Activated CD8-positive, alpha-beta memory T cell treated with anti-CD3 and anti-CD28 coated beads, Interleukin-2, amount 10 ng/mL, durations not matched to agents 7 days and 5 days (primary cell): ENCODE measurements at regions of chr5 and their contacts with region 1.

Region 1: GRCh38 chr5:54867310-54867944 is 118.0 kb downstream of the ESM1 start:
- DNase-seq: no peak
- ATAC-seq: peak; percentile 60
- H3K4me3 Mint-ChIP-seq: no peak overlapping the region
- H3K27ac Mint-ChIP-seq: no peak overlapping the region
- H3K4me1 Mint-ChIP-seq: peaks cover 20% of the 10 kb centered on the region
- H3K27me3 Mint-ChIP-seq: peaks cover 71% of the 10 kb centered on the region

Region 2: GRCh38 chr5:54492178-54492577 is 375.2 kb before region 1 on chr5:
- CTCF ChIA-PET with region 1: interaction called, 20 read pairs
- DNase-seq: no peak
- ATAC-seq: no peak
- H3K4me3 Mint-ChIP-seq: no peak overlapping the region
- H3K27ac Mint-ChIP-seq: no peak overlapping the region
- H3K4me1 Mint-ChIP-seq: no peaks in the 10 kb centered on the region
- H3K27me3 Mint-ChIP-seq: peaks cover 16% of the 10 kb centered on the region

Region 3: DNA sequence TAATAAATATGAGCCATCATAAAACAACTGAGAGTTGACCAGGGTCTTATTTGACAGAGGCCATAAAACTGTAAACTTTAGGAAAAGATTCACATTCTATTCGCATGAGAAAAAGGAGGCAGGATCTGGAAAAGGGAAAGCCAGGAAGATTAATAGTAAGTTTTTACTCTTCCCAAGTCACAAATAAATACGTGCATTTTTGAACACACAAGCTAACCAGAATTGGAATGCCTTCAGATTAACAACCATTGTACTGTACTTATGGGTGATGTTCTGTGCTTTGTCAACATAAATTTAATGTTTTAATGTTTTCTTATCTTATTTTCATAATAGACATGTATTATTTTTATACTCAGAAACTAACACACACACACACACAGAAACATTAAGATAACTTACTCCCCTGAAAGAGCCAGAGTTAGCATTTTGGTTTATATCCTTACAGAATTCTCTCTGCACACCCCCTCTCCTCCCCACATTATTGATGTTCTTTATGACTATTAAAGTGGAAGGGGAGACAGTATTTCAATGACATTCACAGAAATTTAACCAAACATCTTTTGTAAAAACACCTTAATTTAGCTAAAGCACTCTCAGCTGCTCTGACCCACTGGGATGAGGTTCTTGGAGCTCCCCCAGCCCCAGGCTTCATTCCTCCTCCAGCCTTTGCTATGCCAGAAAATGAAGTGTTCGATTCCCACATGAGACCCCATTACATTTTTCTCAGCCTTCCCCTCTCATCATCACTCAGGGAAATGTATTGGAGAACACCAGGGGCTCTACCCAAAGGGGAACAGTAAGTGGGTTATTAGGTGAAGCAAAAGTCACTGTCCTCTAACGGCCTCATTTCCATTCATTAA is 37.5 kb before region 1 on chr5:
- CTCF ChIA-PET with region 1: no interaction called
- DNase-seq: no peak
- ATAC-seq: no peak
- H3K4me3 Mint-ChIP-seq: no peak overlapping the region
- H3K27ac Mint-ChIP-seq: no peak overlapping the region
- H3K4me1 Mint-ChIP-seq: peaks cover 9% of the 10 kb centered on the region
- H3K27me3 Mint-ChIP-seq: peaks cover 5% of the 10 kb centered on the region

Region 4: DNA sequence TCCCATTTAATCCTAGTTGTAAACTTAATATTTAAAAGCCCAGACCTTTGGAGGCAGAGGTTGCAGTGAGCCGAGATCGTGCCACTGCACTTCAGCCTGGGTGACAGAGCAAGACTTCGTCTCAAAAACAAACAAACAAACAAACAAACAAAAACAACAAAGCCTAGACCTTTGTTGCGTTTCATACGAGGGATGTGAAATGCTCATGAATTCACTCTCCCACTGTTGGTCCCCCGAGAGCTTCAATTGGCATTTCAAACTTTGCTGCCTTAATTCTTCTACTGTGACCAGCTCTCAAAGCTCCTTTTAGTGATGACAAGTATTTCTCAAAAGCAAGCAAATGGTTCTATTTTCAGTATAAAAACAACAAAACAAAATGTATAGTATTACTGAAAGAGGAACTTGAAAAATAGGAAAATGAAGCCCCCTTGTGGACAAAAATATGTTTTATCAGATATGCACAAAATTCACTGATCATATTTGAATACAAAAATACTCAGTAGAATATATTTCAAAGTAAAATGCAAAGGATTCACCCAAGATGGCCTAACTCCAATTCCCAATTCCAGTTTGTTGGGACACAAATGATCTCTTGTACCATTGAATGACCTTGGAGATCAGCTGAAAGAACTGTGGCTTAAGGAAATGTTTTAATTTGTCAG is 22.4 kb before region 1 on chr5:
- CTCF ChIA-PET with region 1: interaction called, 42 read pairs
- DNase-seq: no peak
- ATAC-seq: peak; percentile 69
- H3K4me3 Mint-ChIP-seq: no peak overlapping the region
- H3K27ac Mint-ChIP-seq: no peak overlapping the region
- H3K4me1 Mint-ChIP-seq: peaks cover 18% of the 10 kb centered on the region
- H3K27me3 Mint-ChIP-seq: peaks cover 16% of the 10 kb centered on the region

Region 5: DNA sequence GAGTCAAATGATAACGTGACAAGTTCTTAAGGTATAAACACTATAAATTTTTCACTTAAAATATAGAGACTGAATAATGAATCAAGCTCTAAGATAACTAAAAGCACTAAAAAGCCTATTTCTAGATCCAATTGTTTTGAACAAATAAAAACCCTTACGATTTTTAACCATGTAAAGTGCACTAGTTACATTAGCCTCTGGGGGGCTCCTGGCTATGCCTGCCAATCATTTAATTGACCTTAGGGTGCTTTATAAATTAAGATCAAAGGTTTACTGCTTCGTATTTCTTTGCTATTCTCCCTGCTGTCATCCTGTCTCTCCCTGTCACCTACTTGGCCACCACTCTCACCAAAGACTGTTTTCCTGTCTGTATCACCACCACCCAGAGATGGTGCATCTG is 15.4 kb before region 1 on chr5:
- CTCF ChIA-PET with region 1: interaction called, 30 read pairs
- DNase-seq: no peak
- ATAC-seq: no peak
- H3K4me3 Mint-ChIP-seq: no peak overlapping the region
- H3K27ac Mint-ChIP-seq: no peak overlapping the region
- H3K4me1 Mint-ChIP-seq: peaks cover 6% of the 10 kb centered on the region
- H3K27me3 Mint-ChIP-seq: peaks cover 42% of the 10 kb centered on the region

Region 6: DNA sequence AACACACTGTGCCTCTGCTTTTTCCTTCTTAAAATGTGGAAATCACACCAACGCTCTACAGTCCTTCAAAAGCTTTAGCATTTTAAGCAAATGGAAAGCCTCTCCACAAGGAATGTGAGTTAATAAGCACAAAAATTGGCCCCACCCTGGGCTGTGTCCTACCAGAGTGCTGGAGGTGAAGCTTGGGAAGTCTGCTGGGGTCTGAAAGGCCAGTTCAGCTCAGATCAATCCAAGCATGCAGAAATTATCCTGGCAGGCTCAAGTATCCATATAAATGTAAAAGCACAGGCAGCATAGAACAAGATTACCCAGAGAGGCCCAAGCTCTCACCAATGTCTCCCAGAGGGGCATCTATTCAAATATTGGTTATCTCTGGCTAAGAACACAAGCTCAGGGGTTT is 19.4 kb after region 1 on chr5:
- CTCF ChIA-PET with region 1: interaction called, 17 read pairs
- DNase-seq: no peak
- ATAC-seq: no peak
- H3K4me3 Mint-ChIP-seq: no peak overlapping the region
- H3K27ac Mint-ChIP-seq: no peak overlapping the region
- H3K4me1 Mint-ChIP-seq: peaks cover 10% of the 10 kb centered on the region
- H3K27me3 Mint-ChIP-seq: peaks cover 90% of the 10 kb centered on the region

Region 7: DNA sequence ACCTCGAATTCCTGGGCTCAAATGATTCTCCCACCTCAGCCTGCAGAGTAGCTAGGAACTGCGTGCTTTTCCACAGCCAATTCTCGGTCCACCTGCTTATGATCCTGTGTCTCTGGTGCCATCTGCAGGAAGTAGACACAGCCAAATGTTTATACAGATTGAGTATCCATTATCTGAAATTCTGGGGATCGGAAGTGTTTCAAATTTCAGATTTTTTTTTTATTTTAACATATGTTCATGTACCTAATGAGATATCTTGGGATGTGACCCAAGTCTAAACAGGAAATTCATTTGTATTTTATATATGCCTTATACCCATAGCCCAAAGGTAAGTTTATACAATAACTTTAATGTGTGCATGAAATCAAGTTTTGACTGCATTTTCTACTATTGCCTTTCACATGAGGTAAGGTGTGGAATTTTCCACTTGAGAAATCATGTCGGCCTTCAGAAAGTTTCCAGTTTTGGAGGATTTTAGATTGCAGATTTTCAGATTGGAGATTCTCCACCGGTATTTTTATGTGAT is 28.5 kb after region 1 on chr5:
- CTCF ChIA-PET with region 1: interaction called, 21 read pairs
- DNase-seq: no peak
- ATAC-seq: peak; percentile 42
- H3K4me3 Mint-ChIP-seq: peak overlapping the region; percentile 58
- H3K27ac Mint-ChIP-seq: peak overlapping the region; percentile 23
- H3K4me1 Mint-ChIP-seq: peaks cover 5% of the 10 kb centered on the region
- H3K27me3 Mint-ChIP-seq: peaks cover 63% of the 10 kb centered on the region